ENCODE measurements at regions of chr1 and their contacts with region 1.

Region 1: GRCh38 chr1:180178511-180179161 is 24.0 kb downstream of the QSOX1 start:
- DNase-seq: peak; percentile 39 to 68 (median 52)
- H3K4me3 ChIP-seq: no peak overlapping the region
- H3K27ac ChIP-seq: no peak overlapping the region
- H3K4me1 ChIP-seq: no peaks in the 10 kb centered on the region
- H3K27me3 ChIP-seq: no peaks in the 10 kb centered on the region

Region 2: DNA sequence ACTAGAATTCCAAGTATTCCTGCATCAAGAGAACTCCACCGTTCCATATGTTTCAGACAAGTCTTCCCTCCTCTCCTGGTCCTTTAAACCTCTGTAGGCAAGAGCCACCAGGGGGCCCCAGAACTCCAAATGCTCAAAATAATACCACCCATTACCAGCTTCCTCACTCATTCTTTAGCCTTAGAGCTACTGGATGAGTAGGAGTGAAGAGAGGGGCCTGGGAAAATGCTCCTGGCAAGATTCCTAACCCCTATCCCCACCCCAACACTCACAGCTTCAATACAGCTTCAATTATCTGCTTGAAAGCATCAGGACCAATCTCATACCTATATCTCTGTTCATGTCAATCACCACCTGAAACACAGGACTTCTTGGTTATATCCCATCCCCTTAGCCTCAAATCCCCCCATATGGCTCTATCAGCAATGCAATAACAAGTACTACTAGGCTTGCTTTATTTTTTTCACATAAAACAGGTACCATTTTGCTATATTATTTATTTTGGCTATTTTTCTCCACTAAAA is 310.8 kb before region 1 on chr1:
- CTCF ChIA-PET with region 1: interaction called, 32 read pairs
- POLR2A ChIA-PET with region 1: no interaction called
- DNase-seq: peak; percentile 52 to 68 (median 60)
- H3K4me3 ChIP-seq: no peak overlapping the region
- H3K27ac ChIP-seq: no peak overlapping the region
- H3K4me1 ChIP-seq: peaks cover 0 to 6% (median 5%) of the 10 kb centered on the region in 4 experiments
- H3K27me3 ChIP-seq: no peaks in the 10 kb centered on the region

Region 3: GRCh38 chr1:180092931-180093559 is 85.6 kb before region 1 on chr1:
- CTCF ChIA-PET with region 1: interaction called, 10 read pairs
- POLR2A ChIA-PET with region 1: no interaction called
- DNase-seq: no peak
- H3K4me3 ChIP-seq: no peak overlapping the region
- H3K27ac ChIP-seq: no peak overlapping the region
- H3K4me1 ChIP-seq: no peaks in the 10 kb centered on the region
- H3K27me3 ChIP-seq: no peaks in the 10 kb centered on the region

Region 4: DNA sequence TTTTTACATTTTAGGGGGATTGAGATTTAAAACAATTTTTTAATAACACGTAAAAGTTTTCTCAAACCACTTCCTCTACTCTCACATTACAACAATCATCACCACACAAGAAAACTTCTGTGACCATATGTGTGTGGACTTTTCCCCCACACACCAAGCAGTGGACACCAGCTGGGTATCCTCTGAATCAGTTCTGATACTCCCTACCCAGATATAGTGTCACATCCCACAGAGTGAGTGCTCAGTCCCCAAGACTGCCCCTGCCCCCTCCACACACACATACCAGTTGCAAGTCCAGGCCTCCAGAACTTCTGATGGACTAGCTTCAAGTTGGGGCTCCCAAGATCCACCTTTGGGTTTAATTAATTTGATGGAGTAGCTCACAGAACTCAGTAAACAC is 77.2 kb before region 1 on chr1:
- CTCF ChIA-PET with region 1: interaction called, 23 read pairs
- POLR2A ChIA-PET with region 1: interaction called, 3 read pairs
- DNase-seq: no peak
- H3K4me3 ChIP-seq: no peak overlapping the region
- H3K27ac ChIP-seq: no peak overlapping the region
- H3K4me1 ChIP-seq: peaks cover 0 to 6% (median 2%) of the 10 kb centered on the region in 4 experiments
- H3K27me3 ChIP-seq: no peaks in the 10 kb centered on the region